ENCODE measurements at regions of chr2 and their contacts with region 1.

Region 1: DNA sequence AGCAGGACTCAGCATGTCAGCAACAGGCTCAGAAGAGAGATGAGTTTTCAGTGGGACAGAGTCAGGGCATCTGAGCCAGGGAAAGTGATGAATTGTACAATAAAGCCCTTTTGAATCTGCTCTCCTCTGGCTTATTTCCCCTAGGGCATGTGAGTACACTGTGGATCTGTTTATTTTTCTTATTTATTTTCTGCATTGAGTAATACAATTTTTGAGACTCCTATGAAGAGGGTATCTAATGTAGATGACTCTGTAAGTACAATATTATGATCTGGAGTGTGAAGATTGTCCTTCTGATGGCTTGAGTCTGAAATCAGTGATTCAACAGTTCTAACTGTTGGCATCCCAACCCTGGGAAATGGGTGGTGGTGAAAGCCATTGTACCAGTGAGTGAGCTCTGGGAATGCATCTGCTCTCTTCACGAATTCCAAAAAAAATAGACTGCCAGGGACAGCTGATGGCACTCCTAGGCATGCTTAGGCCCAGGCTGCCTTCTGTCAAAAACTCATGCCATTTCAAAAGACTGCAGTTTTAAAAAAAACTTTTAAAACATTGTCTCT is 20.4 kb downstream of the OXER1 start:
- DNase-seq: no peak
- H3K4me3 ChIP-seq: no peak overlapping the region
- H3K27ac ChIP-seq: no peak overlapping the region
- H3K4me1 ChIP-seq: no peaks in the 10 kb centered on the region
- H3K27me3 ChIP-seq: no peaks in the 10 kb centered on the region
- CTCF ChIP-seq: no peak
- POLR2A ChIP-seq: no peak

Region 2: DNA sequence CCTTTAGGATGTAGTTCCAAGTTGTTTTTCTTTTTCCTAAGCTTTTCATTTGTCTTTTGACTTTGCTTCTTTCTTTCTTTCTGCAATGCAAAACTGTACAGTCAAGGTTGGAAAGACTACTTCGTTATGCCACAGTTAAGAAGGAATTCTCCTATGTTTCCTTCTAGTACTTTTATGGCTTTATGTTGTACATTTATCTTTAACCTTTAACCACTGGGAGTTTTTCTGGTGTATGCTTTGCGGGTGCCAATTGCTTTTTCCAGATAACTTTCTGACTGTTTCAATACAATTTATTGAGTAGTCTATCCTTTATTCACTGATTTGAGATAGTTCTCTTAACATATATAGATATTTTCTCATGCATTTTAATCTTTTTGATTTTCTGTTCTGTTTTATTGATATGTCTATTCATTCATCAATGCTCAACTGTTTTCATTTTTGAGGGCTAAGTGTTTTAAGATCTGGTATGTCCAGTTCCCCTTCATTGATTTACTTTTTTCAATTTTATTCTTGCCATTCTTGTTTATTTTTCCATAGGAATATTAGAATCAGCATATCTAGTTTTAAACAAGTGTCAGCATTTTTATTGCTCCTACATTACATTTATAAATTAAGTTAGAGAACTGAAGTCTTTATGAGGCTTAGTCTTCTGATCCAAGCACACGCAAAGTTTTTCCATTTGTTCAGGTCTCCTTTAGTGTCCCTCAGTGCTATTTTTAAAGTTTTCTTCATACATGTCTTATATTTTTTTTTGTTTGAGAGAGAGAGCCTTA is 332.6 kb before region 1 on chr2:
- intact Hi-C with region 1: loop called (anchors 5 kb)
- DNase-seq: no peak
- H3K4me3 ChIP-seq: no peak overlapping the region
- H3K27ac ChIP-seq: no peak overlapping the region
- H3K4me1 ChIP-seq: no peaks in the 10 kb centered on the region
- H3K27me3 ChIP-seq: no peaks in the 10 kb centered on the region
- CTCF ChIP-seq: no peak
- POLR2A ChIP-seq: no peak